SK-N-SH (cell line): ENCODE measurements at regions of chr11 and their contacts with region 1.

Region 1: DNA sequence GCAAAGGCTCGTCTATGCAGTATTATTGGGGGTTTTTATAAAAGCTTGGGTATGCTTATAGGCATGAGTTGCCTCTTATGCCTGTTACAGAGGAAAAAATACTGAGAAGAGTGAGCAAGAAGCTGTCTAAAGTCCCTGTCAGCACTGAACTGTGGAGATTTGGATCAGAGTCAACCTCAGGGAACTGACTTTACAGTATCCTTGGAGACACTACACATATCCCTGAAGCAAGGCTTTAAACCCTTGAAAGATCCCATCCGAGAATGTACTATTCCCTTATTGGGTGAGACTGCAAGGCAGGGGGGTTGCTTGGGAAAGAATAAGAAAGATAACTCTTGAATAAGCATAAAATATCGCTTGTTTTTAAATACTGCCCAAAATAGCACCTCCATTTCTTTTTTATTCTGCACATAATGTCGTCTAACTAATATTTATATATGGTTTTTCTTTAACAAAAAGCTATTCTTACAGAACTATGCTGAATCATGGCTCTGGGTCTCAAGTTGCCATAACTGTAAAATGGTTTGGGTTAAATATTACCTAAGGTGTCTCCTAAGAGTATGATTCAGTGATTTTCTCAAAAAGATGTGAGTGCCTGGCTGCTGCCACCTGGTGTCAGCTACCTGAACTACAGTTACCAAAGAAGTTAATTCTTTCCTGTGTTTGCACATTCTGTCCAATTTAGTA is 1062.8 kb downstream of the DLG2 start:
- DNase-seq: peak; percentile 16
- H3K4me3 ChIP-seq: no peak overlapping the region; a peak in 1 of 4 replicates
- H3K27ac ChIP-seq: no peak overlapping the region
- H3K4me1 ChIP-seq: no peaks in the 10 kb centered on the region
- H3K27me3 ChIP-seq: no peaks in the 10 kb centered on the region
- CTCF ChIP-seq: peak; percentile 90
- EP300 ChIP-seq: no peak
- RAD21 ChIP-seq: peak; percentile 74

Region 2: GRCh38 chr11:83827940-83828554 is 736.3 kb before region 1 on chr11:
- CTCF ChIA-PET with region 1: interaction called, 41 read pairs
- POLR2A ChIA-PET with region 1: no interaction called
- DNase-seq: peak; percentile 30
- H3K4me3 ChIP-seq: peak overlapping the region in 1 of 2 experiments; percentile 33; a peak in 1 of 4 replicates
- H3K27ac ChIP-seq: peak overlapping the region in 1 of 2 experiments; percentile 75; a peak in 2 of 4 replicates
- H3K4me1 ChIP-seq: peaks cover 0 to 32% of the 10 kb centered on the region in 2 experiments; a peak in 1 of 4 replicates
- H3K27me3 ChIP-seq: no peaks in the 10 kb centered on the region
- CTCF ChIP-seq: peak; percentile 77
- EP300 ChIP-seq: no peak
- RAD21 ChIP-seq: peak; percentile 78

Region 3: DNA sequence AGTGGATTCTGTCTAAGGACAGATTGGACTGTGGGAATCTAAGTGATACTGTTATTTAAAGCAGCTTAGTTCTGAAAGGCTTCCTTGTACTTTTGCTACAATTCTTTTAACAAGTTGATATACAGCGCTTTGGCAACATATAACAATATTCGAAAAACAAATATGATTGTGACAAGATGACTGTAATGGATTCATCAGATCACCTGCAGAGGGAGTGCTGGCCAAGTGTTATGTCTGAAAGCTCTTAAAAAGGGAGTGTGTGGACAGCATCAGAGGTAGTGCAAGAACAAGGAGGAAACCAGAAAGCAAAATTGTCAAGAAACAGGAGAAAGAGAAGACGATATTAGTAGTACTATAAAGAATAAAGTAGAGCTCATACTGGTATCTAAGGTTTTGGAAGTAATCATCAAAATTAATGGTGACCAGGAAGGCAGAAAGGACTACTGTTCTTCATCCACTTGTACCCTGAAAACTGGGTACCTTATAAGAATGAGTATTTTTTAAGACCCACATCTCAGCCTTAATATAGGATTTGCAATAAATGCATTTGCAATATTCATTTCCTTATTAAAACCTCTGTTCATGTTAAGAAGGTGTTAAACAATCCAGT is 166.2 kb before region 1 on chr11:
- CTCF ChIA-PET with region 1: interaction called, 37 read pairs
- POLR2A ChIA-PET with region 1: no interaction called
- DNase-seq: peak; percentile 28
- H3K4me3 ChIP-seq: no peak overlapping the region
- H3K27ac ChIP-seq: no peak overlapping the region
- H3K4me1 ChIP-seq: no peaks in the 10 kb centered on the region
- H3K27me3 ChIP-seq: no peaks in the 10 kb centered on the region
- CTCF ChIP-seq: peak; percentile 70
- EP300 ChIP-seq: no peak
- RAD21 ChIP-seq: peak; percentile 80

Region 4: DNA sequence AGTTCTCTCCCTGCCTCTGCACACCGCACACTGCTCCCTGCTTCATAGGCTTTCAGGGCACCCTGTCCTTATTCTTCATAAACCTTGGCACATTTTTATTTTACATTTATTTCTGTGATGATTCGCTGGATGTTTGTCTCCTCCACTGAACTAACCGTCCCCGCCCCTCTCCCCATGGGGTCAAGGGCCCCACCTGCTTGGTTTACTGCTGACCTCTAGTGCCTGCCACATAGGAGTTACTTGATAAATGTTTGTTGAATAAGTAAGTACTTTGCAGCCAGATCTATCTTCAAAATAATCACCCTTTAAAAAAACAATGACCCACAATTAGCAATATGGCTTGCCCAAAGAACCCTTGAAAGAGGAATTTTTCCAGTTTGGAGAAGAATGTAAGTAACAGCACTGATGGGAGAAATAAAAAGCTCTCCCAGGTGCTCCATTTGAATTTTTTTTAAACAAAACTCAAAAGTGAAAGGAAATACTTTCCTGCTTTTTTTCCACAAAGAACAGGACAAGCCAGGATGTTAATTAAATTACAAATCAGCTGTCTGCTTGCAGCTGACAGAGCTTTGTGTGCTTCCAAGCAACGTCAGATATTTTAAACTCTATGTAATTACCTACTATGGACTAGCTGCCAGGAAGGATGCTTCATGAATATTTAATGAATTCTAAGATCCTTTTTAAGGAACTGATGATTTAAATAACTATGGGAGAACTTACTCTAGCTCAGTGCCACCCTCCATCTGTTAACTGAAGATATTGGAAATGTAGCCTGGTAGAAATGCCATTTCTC is 20.8 kb before region 1 on chr11:
- CTCF ChIA-PET with region 1: interaction called, 13 read pairs
- POLR2A ChIA-PET with region 1: no interaction called
- DNase-seq: peak; percentile 8
- H3K4me3 ChIP-seq: no peak overlapping the region
- H3K27ac ChIP-seq: peak overlapping the region in 1 of 2 experiments; percentile 58; a peak in 2 of 4 replicates
- H3K4me1 ChIP-seq: peaks cover 8 to 9% of the 10 kb centered on the region in 2 experiments; a peak in 3 of 4 replicates
- H3K27me3 ChIP-seq: no peaks in the 10 kb centered on the region
- CTCF ChIP-seq: no peak
- EP300 ChIP-seq: no peak
- RAD21 ChIP-seq: peak; percentile 33; the same call in 1 of the 2 replicates

Region 5: GRCh38 chr11:84549217-84549616 is 15.1 kb before region 1 on chr11:
- CTCF ChIA-PET with region 1: interaction called, 61 read pairs
- POLR2A ChIA-PET with region 1: no interaction called
- DNase-seq: no peak
- H3K4me3 ChIP-seq: no peak overlapping the region
- H3K27ac ChIP-seq: no peak overlapping the region
- H3K4me1 ChIP-seq: no peaks in the 10 kb centered on the region
- H3K27me3 ChIP-seq: no peaks in the 10 kb centered on the region
- CTCF ChIP-seq: no peak
- EP300 ChIP-seq: no peak
- RAD21 ChIP-seq: no peak

Region 6: GRCh38 chr11:84648471-84648870 is 84.1 kb after region 1 on chr11:
- CTCF ChIA-PET with region 1: no interaction called
- POLR2A ChIA-PET with region 1: no interaction called
- DNase-seq: no peak
- H3K4me3 ChIP-seq: no peak overlapping the region
- H3K27ac ChIP-seq: no peak overlapping the region
- H3K4me1 ChIP-seq: no peaks in the 10 kb centered on the region
- H3K27me3 ChIP-seq: no peaks in the 10 kb centered on the region
- CTCF ChIP-seq: no peak
- EP300 ChIP-seq: no peak
- RAD21 ChIP-seq: no peak